ENCODE measurements at regions of chr15 and their contacts with region 1.

Region 1: GRCh38 chr15:76336254-76337058 is at the start of gene ISL2:
- DNase-seq: peak; percentile 95
- ATAC-seq: peak; percentile 73
- H3K4me3 ChIP-seq: peak within 1 kb of the TSS; percentile 77 to 93 (median 93)
- H3K27ac ChIP-seq: peak within 1 kb of the TSS; percentile 86
- H3K4me1 ChIP-seq: peaks cover 48% of the 10 kb centered on the region
- H3K27me3 ChIP-seq: no peaks in the 10 kb centered on the region; a peak in 1 of 5 replicates
- CTCF ChIP-seq: peak; percentile 2; the same call in 1 of the 2 replicates
- EP300 ChIP-seq: peak in 1 of 2 experiments; percentile 38; a peak in 1 of 4 replicates
- POLR2A ChIP-seq: peak; percentile 86
- RAD21 ChIP-seq: no peak
- total RNA-seq, gene ISL2: 2.5 and 5.1 TPM in 2 replicates

Region 2: DNA sequence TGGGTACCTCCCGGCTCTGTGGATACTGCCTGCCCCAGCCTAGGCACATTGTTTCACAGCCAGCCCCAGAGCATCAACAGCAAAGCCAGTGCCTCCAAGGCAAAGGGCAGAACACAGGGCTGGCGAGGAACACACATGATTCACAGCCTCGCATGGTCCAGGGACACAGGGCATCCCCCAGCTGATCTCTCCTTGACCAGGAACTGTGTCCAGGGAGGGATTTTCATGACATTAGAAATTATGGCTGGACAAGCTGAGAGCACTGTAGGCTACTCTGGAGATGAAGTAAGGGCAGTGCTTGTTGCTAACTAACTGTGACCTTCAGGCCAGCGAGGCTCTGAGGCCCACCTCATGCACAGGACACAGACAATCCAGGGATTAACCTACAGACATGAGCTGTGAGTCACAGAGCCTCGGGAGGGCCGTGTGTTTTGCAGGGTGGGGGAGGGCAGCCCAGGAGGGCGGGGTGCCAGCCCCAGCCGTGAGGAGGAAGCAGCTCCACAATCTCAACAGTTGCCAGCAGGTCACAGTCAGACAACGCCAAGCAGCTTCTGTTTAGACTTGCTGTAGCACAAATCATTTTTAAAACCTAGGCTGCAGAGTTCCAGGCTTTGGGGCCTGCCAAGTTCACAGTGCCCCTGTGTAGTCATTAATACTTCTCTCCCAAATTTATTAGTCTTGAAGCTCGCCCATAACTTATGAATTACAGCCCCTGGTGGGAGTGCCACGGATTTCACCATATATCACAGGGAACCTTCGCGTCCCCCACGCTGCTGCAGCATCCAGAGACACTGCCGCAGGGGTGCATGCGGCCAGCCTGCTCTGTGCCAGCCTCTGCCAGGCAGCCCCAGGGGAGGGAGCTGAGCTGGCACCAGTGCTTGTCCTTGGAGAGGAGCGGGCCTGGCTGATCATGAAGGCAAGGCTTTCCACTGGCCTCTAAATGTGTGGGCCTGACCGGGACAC is 139.9 kb before region 1 on chr15:
- CTCF ChIA-PET with region 1: no interaction called
- POLR2A ChIA-PET with region 1: interaction called, 15 read pairs
- in situ Hi-C with region 1: loop called (anchors 5 kb)
- intact Hi-C with region 1: loop called (anchors 5 kb)
- DNase-seq: peak; percentile 86
- ATAC-seq: peak; percentile 78
- H3K4me3 ChIP-seq: peak overlapping the region in 1 of 3 experiments; percentile 30; a peak in 2 of 6 replicates
- H3K27ac ChIP-seq: peak overlapping the region; percentile 39
- H3K4me1 ChIP-seq: peaks cover 53% of the 10 kb centered on the region
- H3K27me3 ChIP-seq: no peaks in the 10 kb centered on the region
- CTCF ChIP-seq: 0 out of 2 replicates have a peak, but pooled peaks have one; percentile 17
- EP300 ChIP-seq: peak in 1 of 2 experiments; percentile 13; a peak in 1 of 4 replicates
- POLR2A ChIP-seq: no peak
- RAD21 ChIP-seq: no peak

Region 3: GRCh38 chr15:76285239-76285825 is 51.1 kb before region 1 on chr15:
- CTCF ChIA-PET with region 1: no interaction called
- POLR2A ChIA-PET with region 1: interaction called, 3 read pairs
- in situ Hi-C with region 1: no loop called
- intact Hi-C with region 1: loop called (anchors 10 kb)
- DNase-seq: peak; percentile 4
- ATAC-seq: peak; percentile 34; the same call in 1 of the 3 replicates
- H3K4me3 ChIP-seq: no peak overlapping the region
- H3K27ac ChIP-seq: no peak overlapping the region
- H3K4me1 ChIP-seq: peaks cover 17% of the 10 kb centered on the region
- H3K27me3 ChIP-seq: no peaks in the 10 kb centered on the region
- CTCF ChIP-seq: 0 out of 2 replicates have a peak, but pooled peaks have one; percentile 33
- EP300 ChIP-seq: no peak
- POLR2A ChIP-seq: no peak
- RAD21 ChIP-seq: no peak

Region 4: DNA sequence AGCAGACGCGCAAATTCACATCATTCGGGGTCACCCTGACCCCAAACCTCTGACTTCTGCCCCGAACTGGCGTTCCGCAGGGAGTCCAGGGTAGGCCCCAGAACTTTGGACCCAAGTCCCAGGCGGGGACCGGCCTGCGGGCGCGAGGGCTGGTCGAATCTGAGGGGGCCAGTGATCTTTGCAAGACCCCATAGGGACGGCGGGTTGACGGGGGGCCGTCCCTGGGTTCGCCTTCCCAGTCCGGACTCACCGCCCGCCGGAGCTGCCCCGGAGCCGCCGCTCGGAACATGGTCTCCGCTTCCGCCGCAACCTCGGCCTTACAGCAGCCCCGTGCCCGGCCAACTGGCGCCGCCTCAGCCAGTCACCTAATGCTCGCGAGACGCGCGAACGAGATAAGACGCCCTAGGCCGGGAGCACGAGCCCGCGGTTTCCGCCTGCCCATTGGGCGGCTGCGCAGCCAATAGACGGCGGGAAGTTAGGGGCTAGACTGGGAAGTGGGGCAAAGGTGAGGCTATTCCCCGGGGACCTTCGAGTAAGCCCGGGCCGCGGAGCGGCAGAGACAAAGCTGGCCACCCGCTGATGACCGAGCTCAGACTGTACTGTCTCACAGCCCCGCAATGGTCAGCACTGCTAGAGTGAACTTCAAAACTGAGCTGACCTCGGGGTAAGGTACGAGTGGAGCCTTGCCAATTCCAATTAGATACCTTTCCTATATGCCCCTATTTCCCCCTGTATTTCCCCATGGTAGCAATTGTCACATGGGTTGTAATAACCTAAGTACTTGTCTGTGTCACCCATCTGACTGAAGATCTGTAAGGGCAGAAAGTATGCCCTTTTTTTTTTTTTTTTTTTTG is 25.1 kb before region 1 on chr15 and contains the start of gene ETFA:
- CTCF ChIA-PET with region 1: no interaction called
- POLR2A ChIA-PET with region 1: interaction called, 132 read pairs
- in situ Hi-C with region 1: no loop called
- intact Hi-C with region 1: loop called (anchors 1 kb)
- DNase-seq: peak; percentile 95
- ATAC-seq: peak; percentile 96
- H3K4me3 ChIP-seq: peak within 1 kb of the TSS; percentile 83 to 98 (median 97)
- H3K27ac ChIP-seq: peak within 1 kb of the TSS; percentile 96
- H3K4me1 ChIP-seq: peaks cover 64% of the 10 kb centered on the region
- H3K27me3 ChIP-seq: no peaks in the 10 kb centered on the region; a peak in 1 of 5 replicates
- CTCF ChIP-seq: 0 out of 2 replicates have a peak, but pooled peaks have one; percentile 4
- EP300 ChIP-seq: no peak
- POLR2A ChIP-seq: peak; percentile 96
- RAD21 ChIP-seq: no peak
- total RNA-seq, gene ETFA: 396 and 456 TPM in 2 replicates